ENCODE measurements at regions of chr20 and their contacts with region 1.

Region 1: GRCh38 chr20:20489648-20490341 is 121.9 kb downstream of the INSM1 start:
- DNase-seq: no peak
- H3K4me3 Mint-ChIP-seq: peak overlapping the region; percentile 63
- H3K27ac Mint-ChIP-seq: peak overlapping the region; percentile 85
- H3K4me1 Mint-ChIP-seq: peaks cover 63% of the 10 kb centered on the region
- H3K27me3 Mint-ChIP-seq: no peaks in the 10 kb centered on the region

Region 2: DNA sequence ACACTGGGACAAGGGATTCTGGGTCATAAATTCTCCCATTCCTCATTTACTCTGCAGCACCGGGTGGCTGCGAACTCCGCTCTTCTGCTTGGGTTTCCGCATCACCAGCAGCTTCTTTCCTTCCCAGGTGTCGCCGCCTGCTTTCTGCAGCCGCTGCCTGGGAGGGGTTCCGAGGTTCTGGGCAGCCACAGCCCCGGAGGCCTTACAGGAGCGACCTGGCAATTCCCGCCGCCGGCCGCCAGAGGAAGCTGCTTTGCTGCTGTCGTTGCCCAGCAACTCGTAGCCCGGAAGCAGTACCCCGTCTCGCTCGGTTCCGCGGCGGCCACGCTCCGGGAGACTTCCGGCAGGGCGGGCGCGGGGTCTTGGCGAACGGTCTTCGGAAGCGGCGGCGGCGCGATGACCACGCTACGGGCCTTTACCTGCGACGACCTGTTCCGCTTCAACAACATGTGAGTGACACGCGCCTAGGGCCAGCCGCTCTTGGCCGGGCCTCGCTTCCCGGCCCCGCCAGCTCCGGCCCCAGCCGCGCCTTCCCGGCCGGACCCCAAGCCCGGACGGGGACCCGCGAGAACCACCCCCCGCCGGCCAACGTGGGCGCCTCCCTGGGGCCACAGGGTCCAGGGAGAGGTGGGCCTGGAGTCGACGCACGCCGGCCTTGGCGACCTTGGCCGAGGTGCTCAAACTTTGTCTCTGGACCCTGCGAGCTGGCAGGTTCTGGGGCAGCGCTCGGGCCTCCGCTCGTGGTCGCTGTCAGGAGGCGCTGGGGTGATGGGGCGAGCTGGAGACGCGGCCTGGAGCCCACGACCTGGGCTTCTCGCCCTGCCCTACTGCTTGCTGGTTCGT is 472.6 kb before region 1 on chr20 and contains the start of gene NAA20:
- intact Hi-C with region 1: loop called (anchors 10 kb)
- DNase-seq: peak; percentile 88
- H3K4me3 Mint-ChIP-seq: peak within 1 kb of the TSS; percentile 90
- H3K27ac Mint-ChIP-seq: peak within 1 kb of the TSS; percentile 86
- H3K4me1 Mint-ChIP-seq: peaks cover 44% of the 10 kb centered on the region
- H3K27me3 Mint-ChIP-seq: no peaks in the 10 kb centered on the region
- total RNA-seq, gene NAA20: 86.3 and 89.9 TPM in 2 replicates

Region 3: DNA sequence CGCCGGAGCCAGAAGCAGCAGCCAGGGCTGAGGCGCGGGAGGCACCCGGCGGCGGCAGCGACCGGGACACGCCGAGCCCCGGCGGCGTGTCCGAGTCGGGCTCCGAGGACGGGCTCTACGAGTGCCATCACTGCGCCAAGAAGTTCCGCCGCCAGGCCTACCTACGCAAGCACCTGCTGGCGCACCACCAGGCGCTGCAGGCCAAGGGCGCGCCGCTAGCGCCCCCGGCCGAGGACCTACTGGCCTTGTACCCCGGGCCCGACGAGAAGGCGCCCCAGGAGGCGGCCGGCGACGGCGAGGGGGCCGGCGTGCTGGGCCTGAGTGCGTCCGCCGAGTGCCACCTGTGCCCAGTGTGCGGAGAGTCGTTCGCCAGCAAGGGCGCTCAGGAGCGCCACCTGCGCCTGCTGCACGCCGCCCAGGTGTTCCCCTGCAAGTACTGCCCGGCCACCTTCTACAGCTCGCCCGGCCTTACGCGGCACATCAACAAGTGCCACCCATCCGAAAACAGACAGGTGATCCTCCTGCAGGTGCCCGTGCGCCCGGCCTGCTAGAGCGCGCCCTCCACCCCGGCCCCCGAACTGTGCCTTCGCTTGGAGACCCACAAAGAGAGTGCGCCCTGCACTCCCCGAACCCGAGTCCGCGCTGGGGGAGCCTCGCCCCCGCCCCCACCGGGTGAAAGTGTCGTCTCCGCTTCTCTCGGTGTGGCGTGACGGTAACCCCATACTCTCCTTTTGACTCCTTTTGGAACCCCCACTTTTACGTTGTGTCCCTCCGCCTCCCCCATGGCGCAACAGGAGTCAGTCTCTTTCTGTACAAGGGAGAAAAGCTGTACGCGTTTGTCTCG is 120.3 kb before region 1 on chr20:
- intact Hi-C with region 1: loop called (anchors 2 kb)
- DNase-seq: no peak
- H3K4me3 Mint-ChIP-seq: peak overlapping the region; percentile 88
- H3K27ac Mint-ChIP-seq: peak overlapping the region; percentile 89
- H3K4me1 Mint-ChIP-seq: peaks cover 28% of the 10 kb centered on the region
- H3K27me3 Mint-ChIP-seq: peaks cover 60% of the 10 kb centered on the region

Region 4: DNA sequence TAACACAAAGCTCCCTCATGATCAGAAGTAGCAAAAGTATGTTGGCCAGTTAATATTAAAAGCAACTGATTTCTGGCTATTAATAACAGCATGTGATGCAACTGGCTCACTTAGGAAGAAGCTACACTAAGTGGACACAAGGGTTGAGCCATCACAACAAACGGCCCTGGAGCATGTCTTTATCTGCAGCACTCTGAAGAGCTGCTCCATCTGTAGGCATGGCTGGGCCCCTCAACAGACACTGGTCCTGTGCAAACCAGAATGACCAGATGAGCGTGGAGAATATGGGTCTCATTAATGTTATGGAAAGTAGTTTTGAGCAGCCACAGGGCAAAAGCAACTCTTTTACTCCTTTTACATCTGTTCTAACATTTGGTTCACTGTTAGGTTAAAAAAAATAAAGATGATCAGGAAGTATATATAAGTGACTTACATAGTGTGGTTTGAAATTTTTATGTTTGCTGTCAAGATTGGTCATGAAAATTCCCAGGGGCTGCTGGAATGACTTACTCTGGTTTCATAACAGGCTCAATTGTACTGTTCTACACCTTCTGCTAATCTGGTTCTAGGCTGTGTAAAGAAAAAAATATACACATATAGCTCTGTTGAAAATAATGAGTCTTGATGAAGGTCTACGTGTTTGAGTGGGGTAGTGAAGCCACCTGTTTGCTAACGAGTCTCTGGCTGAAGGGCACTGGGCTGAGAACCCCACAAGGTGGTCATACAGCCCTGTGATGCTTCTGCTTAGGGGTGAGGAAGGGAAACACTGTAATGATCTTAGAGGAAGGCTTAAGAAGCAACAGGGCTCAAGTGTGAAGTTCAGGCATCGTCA is 63.8 kb before region 1 on chr20:
- intact Hi-C with region 1: loop called (anchors 1 kb)
- DNase-seq: no peak
- H3K4me3 Mint-ChIP-seq: no peak overlapping the region
- H3K27ac Mint-ChIP-seq: peak overlapping the region; percentile 55
- H3K4me1 Mint-ChIP-seq: peaks cover 35% of the 10 kb centered on the region
- H3K27me3 Mint-ChIP-seq: no peaks in the 10 kb centered on the region

Region 5: GRCh38 chr20:20466341-20466879 is 23.4 kb before region 1 on chr20:
- intact Hi-C with region 1: loop called (anchors 1 kb)
- DNase-seq: no peak
- H3K4me3 Mint-ChIP-seq: no peak overlapping the region
- H3K27ac Mint-ChIP-seq: peak overlapping the region; percentile 83
- H3K4me1 Mint-ChIP-seq: peaks cover 31% of the 10 kb centered on the region
- H3K27me3 Mint-ChIP-seq: no peaks in the 10 kb centered on the region

Region 6: DNA sequence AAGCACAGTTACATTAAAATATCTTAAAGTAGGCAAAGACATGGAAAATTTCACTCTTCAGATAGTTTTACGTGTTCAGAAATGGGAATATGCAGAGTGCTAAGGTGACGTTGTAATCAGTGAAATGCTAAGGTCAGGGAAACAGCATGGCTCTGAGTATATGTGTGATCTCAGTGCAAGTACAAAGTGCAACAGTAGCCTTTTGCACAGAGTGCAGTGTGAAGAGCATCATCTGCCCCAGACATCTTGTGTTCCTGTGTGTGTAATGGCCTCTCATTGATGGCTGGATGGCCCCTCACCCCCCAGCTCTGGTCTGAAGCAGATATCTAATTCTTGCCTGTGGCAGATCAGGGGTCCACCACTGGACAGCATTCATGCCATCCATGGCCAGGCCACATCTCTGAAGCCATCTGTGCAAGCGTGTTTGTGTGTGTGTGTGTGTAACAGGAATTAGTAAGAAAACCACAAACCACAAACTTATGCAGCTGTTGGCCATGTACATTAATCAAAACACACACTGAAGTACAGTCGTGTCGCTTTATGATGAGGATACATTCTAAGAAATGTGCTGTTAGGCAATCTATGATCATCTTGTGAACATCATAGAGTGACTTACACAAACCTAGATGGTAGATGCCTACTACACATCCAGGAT is 57.6 kb after region 1 on chr20:
- intact Hi-C with region 1: loop called (anchors 2 kb)
- DNase-seq: no peak
- H3K4me3 Mint-ChIP-seq: no peak overlapping the region
- H3K27ac Mint-ChIP-seq: peak overlapping the region; percentile 63
- H3K4me1 Mint-ChIP-seq: peaks cover 33% of the 10 kb centered on the region
- H3K27me3 Mint-ChIP-seq: no peaks in the 10 kb centered on the region

Region 7: DNA sequence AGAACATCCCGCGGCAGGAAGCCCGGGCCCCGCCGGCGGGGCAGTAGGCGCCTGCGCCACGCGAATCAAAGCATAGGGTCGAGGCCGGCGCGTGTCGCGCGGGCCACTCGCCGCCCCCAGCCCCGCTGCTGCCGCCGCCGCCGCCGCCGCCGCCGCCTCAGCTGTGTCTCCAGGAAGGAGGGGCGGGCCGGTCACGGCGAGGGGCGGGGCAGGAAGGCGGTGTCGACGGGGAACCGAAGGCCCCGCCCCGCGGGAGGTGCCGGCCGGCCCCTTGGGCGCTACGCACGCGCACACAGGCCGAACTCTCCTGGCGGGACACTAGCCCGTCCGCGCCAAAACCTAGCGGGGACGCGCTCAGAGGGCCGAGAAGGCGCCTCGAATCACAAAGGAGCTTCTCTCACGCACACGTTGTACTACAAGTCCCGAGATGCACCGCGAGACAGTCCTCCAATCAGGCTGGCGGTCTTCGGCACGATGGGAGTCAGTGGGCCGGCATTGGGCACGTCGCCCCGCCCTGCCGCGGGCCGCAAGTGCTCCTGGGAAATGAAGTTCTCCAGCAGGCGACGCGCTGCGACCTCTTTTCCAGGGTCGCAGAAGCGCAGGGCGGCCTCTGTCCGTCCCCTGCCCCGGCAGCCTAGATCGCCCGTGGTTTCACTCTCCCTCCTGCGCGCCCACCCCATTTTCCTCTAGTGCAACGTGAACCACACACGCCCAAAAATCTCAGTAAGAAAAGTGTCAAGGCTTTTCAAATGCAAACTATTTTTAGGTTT is 222.9 kb after region 1 on chr20 and contains the start of gene RALGAPA2:
- intact Hi-C with region 1: loop called (anchors 5 kb)
- DNase-seq: peak; percentile 91
- H3K4me3 Mint-ChIP-seq: peak within 1 kb of the TSS; percentile 95
- H3K27ac Mint-ChIP-seq: peak within 1 kb of the TSS; percentile 89
- H3K4me1 Mint-ChIP-seq: peaks cover 33% of the 10 kb centered on the region
- H3K27me3 Mint-ChIP-seq: no peaks in the 10 kb centered on the region
- total RNA-seq, gene RALGAPA2: 18.0 and 19.6 TPM in 2 replicates

Region 8: DNA sequence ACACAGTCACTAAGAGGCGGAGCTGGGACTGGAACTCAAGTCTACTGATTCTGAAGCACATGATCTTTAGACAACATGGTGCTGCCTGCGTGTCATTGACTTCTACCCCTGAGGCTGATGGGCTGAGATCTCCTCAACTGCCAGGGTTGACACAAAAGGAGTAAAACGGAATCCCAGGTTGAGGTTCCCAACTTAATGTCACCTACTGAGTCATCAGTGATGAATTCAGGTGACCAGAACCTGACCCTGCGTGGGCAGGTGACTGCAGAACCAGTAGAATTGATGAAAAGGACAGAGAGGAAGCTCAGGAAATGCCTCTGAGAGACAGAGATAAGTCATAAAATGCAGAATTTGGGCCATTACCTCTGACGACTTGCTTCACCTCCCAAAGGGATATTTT is 628.3 kb after region 1 on chr20:
- intact Hi-C with region 1: no loop called
- DNase-seq: no peak
- H3K4me3 Mint-ChIP-seq: no peak overlapping the region
- H3K27ac Mint-ChIP-seq: no peak overlapping the region
- H3K4me1 Mint-ChIP-seq: no peaks in the 10 kb centered on the region
- H3K27me3 Mint-ChIP-seq: peaks cover 33% of the 10 kb centered on the region